ENCODE measurements at regions of chr6 and their contacts with region 1.

Region 1: DNA sequence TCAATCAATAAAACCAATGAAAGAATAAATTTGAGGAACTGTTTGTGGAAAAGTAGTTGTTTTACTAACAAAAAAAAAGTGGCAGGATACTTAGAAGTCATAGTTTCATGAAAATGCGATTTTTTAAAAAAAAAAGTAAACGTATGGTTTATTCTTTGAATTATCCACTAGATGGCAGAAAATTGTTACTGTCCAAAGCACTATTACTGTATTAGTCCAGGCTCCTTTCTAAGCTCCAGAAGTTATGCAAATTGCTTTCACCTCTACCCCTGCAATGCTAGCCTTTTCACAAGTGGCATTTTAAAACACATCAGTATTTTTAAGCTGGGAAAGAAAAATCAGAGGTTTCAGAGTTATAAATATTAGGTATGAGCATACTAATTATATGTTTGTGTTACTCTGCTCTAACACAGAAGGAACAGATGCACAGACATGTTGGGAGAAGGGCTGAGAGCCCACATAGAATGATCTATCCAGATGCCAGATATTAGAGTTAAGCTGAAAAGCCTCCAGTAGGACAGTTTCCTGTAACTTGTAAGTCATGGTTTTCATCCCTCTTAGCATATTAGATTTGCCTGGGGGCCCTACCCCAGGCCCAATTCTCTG is 63.9 kb downstream of the FHL5 start:
- H3K4me3 ChIP-seq: no peak overlapping the region
- H3K27ac ChIP-seq: no peak overlapping the region
- H3K4me1 ChIP-seq: no peaks in the 10 kb centered on the region; the same call in 1 of the 2 replicates
- CTCF ChIP-seq: 0 out of 2 replicates have a peak, but pooled peaks have one; percentile 9

Region 2: GRCh38 chr6:96563853-96564252 is 63.0 kb before region 1 on chr6:
- CTCF ChIA-PET with region 1: no interaction called
- POLR2A ChIA-PET with region 1: no interaction called
- H3K4me3 ChIP-seq: no peak overlapping the region
- H3K27ac ChIP-seq: no peak overlapping the region
- H3K4me1 ChIP-seq: no peaks in the 10 kb centered on the region
- CTCF ChIP-seq: no peak

Region 3: DNA sequence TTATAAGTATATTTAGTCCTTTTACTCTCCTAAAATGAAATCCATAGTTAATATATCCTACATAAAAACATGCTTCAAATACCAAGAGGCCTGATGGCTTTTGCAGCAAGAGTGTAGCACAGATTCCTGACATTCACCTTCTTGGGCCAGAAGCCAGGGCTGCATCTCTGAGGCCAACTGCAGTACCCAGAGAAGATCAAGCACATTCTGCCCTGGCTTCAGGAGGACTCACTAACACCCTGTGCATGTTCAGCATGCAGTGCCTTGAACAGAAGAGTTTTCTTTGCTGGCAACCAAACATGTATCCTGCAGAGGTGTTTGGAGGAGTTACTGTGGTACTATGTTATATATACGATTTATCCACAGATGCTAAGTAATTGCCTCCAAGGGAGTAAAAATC is 26.3 kb after region 1 on chr6:
- CTCF ChIA-PET with region 1: interaction called, 12 read pairs
- POLR2A ChIA-PET with region 1: no interaction called
- H3K4me3 ChIP-seq: no peak overlapping the region
- H3K27ac ChIP-seq: no peak overlapping the region
- H3K4me1 ChIP-seq: no peaks in the 10 kb centered on the region
- CTCF ChIP-seq: no peak

Region 4: DNA sequence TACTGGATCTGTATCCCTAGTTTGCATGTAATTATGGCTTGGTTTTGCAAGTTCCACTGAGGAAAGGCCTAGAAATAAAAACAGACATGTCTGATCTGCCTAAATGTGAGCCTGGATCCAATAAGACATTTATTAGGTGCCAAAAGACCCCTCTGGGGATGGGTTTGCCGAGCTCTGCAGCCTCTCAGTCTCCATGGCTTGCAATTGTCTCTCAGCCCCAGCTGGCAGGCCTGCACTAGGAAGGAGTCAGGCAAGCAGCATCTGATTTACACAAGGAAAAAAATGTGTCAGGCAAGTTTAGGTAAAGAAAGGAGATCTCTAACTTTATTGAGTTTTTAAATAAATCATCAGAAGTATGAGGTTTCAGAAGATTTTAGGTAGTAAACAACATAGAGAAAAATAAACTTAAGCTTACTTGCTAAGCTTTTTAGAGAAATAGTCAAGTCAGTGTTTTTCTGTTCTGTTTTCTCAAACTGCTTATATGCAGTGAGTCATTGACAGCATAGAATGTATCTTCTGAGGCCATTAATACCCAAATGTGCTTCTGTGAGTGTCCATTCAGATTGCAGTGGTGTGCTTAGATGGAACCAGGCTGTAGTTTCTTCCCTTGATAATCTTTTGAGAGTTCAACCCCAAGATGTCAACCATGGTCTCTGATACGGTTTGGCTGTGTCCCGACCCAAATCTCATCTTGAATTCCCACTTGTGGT is 57.1 kb after region 1 on chr6:
- CTCF ChIA-PET with region 1: no interaction called
- POLR2A ChIA-PET with region 1: no interaction called
- H3K4me3 ChIP-seq: no peak overlapping the region
- H3K27ac ChIP-seq: no peak overlapping the region
- H3K4me1 ChIP-seq: no peaks in the 10 kb centered on the region
- CTCF ChIP-seq: no peak

Region 5: DNA sequence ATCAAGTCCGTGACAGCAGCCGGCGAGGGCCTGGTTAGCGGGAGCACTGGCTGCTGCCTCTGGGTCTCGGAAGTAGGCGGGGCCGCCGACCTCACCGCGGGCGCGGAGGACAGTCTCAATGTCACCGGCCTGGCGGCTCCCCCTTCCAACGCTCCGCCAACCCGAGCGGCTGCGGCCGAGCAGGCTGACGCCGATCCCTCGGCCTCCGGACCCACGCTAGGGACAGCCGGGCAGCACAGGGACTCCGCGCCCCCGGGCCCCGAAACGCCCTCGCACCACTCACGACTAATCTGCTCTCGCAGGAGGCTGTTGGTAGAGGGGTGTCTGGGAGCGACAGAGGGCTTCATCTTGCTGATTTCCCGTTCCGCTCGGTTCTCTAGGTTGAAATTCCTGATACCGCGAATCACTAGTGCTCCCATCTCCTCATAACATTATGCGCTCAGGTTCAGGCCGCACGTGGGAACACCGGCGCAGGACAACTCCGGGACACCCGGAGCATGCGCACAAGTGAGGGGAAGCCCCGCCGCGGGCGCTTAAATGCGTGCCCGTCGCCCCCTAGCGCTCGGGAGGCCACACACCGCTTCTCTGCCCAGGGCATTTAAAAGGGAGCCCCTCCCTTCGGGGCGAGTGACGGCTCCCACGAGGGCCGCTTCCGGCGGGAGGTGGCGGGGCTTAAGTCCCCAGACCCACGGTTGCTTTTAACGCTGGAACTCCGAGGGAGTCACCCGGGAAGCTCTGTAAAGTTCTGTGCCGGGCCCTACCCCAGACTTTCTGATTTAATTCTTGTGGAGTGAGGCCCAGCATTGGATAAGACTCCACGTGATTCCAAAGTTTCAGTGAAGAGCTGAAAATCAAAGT is 270.8 kb after region 1 on chr6 and contains the start of gene NDUFAF4:
- CTCF ChIA-PET with region 1: interaction called, 22 read pairs
- POLR2A ChIA-PET with region 1: no interaction called
- H3K4me3 ChIP-seq: peak within 1 kb of the TSS; percentile 92
- H3K27ac ChIP-seq: peak within 1 kb of the TSS; percentile 63
- H3K4me1 ChIP-seq: no peaks in the 10 kb centered on the region
- CTCF ChIP-seq: peak; percentile 95

Region 6: GRCh38 chr6:97059473-97059872 is 432.6 kb after region 1 on chr6:
- CTCF ChIA-PET with region 1: interaction called, 42 read pairs
- POLR2A ChIA-PET with region 1: no interaction called
- H3K4me3 ChIP-seq: no peak overlapping the region
- H3K27ac ChIP-seq: no peak overlapping the region
- H3K4me1 ChIP-seq: no peaks in the 10 kb centered on the region
- CTCF ChIP-seq: peak; percentile 14; the same call in 1 of the 2 replicates